ENCODE measurements at regions of chr6 and their contacts with region 1.

Region 1: DNA sequence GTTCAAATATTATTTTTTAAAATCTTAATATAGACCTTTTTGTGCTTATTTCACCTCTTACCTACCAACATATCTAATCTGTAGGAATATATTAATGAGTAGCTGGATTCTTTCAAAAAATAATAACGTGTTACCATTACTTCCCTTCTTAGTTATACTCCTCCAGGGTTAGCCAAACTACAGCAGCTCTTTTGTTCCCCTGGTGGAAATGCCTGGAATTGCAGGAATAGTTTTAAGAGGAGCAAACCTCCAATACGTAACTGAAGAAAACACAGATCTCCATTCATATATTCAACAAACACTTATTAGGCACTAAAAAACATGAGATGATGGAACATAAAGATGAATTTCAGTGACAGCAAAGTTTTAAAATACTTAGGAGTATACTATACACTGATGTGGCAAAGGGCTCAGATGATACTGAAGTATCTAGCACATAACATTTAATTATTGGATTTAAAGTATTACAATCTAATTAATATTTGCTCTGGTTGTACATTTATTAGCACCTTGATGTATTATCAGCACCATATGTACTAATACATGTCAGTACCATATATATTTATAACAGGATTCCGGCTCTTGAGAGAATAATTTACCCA is 78.3 kb downstream of the TBX18 start:
- DNase-seq: peak; percentile 74
- ATAC-seq: peak; percentile 24; the same call in 1 of the 2 replicates
- H3K4me3 ChIP-seq: no peak overlapping the region
- H3K27ac ChIP-seq: no peak overlapping the region
- H3K4me1 ChIP-seq: no peaks in the 10 kb centered on the region
- H3K27me3 ChIP-seq: no peaks in the 10 kb centered on the region
- CTCF ChIP-seq: peak; percentile 84

Region 2: DNA sequence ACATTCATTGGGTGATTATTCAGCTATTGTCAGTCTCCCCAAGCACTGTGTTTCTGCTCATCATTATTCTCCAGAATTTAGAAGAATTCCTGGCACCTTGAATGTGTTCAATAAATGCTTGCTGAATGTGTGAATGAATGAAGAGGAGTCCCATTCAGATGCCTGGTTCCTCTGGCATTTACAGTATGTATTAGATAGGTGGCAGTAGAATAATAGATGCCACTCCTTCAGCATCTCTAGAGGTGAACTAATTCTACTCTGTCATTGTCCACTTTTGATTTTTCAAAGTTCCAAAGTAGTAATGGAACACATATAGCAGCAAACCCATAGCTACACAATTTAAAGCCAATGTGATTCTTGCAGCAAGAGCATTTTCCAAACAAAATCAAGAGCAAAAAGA is 339.7 kb before region 1 on chr6:
- CTCF ChIA-PET with region 1: no interaction called
- POLR2A ChIA-PET with region 1: no interaction called
- intact Hi-C with region 1: loop called (anchors 10 kb)
- DNase-seq: peak; percentile 11
- ATAC-seq: peak; percentile 56
- H3K4me3 ChIP-seq: no peak overlapping the region
- H3K27ac ChIP-seq: no peak overlapping the region
- H3K4me1 ChIP-seq: no peaks in the 10 kb centered on the region
- H3K27me3 ChIP-seq: no peaks in the 10 kb centered on the region
- CTCF ChIP-seq: peak; percentile 59

Region 3: DNA sequence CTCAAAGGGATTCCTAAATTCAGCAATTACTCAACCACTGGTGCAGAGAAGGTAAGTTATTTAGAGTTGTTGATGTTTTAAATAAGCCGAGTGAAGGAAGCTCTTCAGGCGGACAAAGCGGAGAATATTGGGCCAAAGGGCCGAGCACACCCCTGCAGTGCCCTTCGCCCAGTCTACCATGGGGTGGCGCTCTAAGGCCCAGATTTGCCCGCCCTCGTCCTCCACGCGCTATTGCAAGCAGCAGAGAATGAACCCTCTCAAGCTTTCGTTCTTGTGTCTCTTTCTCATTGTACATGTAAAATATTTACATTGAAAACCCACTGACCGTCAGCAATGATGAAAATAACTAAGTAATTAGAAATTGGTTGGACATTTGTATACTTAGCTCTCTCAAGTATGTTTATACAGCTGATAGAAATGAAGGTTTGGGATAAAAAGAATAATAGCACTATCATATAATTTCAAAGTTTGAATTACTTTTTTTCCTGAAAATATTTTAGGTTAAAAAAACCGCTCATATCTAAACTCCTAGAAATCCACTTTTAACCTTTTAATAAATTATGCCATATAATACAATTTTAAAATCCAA is 263.6 kb before region 1 on chr6:
- CTCF ChIA-PET with region 1: no interaction called
- POLR2A ChIA-PET with region 1: no interaction called
- intact Hi-C with region 1: loop called (anchors 2 kb)
- DNase-seq: peak; percentile 18
- ATAC-seq: 0 out of 2 replicates have a peak, but pooled peaks have one; percentile 43
- H3K4me3 ChIP-seq: no peak overlapping the region
- H3K27ac ChIP-seq: no peak overlapping the region
- H3K4me1 ChIP-seq: no peaks in the 10 kb centered on the region
- H3K27me3 ChIP-seq: no peaks in the 10 kb centered on the region
- CTCF ChIP-seq: peak; percentile 58